ENCODE measurements at regions of chr3 and their contacts with region 1.

Region 1: DNA sequence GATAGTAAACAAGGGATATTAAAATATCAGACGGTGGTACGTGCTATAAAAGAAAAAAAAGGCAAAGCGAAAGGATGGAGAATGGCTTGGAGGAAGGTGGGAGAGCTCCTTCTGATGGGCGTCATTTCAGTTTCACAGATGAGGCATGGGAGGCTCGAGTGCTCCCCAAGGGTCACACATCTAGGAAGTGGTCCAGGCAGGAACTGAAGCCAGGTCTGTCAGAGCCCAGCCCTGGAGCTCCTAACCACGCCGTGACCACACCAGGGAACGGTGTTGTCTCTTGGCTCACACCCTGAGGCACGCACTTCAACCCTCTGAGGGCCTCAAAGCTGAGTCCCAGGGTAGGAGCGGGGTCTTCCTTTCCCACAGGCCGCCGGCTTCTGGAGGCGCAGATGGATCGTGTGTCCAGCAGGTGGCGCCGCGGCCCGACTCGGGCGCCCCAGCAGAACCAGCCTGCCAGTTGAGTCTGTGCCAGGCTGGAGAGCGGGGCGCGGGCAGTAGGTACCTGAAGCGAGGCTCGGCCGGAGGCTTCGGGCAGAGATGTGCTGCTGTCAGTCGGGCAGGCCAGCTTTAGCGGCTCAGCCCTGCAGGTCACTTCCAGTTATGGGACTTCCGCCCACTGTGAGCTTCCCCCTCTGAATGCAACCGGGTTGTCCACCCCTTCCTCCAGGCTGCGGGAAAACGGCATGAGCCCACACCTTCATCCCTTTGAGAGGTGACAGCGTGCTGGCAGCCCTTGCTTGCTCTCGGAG is 68.1 kb downstream of the SLC6A1 start:
- DNase-seq: peak; percentile 81

Region 2: DNA sequence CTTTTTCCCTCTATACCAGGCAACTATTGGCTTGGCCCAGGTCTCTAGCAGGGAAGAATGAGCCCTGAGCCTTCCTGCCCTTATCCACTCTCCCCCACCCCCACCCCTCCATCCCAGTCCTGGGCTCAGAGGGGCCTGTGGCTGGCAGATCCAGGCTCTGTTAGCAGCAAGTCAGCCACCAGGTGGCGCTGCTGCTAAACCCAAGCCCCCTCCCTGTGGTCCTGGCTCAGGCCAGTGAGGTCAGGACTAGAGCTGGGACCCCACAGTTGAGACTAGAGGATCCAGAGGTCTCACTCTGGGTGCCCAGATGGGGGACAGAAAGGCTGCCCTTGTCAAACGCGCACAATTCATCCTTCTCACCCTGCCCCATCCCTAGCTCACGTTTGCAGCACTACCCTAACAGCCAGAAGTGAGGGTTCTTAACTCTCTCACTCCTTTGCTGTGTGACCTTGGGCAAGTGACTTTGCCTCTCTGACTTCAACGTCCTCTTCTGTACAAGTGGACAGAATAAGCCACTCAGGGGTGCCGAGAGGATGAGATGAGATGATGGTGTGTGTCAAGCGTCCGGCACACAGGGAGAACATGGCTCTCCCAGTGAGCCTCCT is 114.9 kb before region 1 on chr3:
- CTCF ChIA-PET with region 1: interaction called, 22 read pairs
- POLR2A ChIA-PET with region 1: interaction called, 4 read pairs
- DNase-seq: peak; percentile 83

Region 3: DNA sequence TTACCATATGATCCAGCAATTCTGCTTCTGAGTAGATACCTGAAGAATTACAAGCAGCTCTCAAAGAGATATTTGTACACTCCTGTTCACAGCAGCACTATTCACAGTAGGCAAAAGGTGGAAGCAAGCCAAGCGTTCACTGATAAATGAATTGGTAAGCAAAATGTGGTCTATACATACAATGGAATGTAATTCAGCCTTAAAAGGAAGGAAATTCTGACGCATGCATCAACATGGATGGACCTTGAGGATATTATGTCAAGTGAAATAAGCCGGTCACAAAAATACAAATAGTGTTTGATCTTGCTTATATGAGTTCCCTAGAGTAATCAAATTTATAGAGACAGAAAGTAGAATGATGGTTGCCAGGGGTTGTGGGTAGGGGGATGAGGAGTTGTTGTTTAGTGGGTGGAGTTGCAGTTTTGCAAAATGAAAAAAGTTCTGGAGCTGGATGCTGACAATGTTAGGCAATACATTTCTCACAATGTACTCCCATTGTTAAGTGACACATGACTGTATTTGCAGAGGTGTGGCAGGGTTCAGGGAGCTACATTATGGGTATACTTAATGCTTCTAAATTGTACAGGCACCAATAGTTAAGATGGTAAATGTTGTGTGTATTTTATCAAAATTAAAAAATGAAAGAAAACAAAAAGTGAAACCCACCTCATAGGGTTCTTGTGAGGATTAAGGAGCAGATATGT is 41.4 kb before region 1 on chr3:
- CTCF ChIA-PET with region 1: no interaction called
- POLR2A ChIA-PET with region 1: no interaction called
- DNase-seq: no peak

Measured in HEK293T (cell line).